ENCODE measurements at regions of chr16 and their contacts with region 1.

Region 1: DNA sequence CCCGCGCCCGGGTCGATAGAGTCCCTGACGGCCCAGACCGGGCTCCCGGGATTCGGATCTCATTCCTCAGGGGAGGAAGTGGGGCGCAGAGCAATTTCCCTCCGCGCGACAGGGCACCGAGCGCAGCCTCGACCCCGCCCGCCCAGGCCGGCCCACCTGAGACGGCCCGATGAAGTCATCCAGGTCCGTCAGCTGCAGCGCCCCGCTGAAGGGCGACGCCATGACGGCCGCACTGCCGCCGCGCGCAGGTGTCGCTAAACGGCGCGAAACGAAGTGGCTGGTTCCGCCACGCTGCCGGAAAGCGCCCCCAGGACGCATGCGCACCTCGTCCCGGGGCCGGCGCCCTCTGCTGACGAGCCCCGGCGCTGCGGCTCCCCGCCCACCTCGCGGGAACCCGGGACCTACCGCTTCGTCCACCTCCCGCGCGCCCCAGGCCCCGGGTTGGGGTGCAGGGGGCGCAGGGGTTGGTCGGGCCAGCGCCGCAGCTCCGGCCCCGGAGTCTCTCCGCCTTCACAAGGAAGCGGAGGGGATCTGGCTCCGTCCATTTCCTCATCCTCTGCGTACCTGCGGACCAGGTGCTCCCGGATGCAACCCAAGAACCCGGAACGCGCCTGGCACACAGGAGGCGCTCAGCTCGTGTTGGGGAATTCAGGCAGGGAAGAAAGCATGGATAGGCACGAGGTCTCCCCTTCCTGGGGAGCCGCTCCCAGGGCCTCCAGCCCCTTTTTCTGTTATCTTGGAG is at the start of gene CIAO3:
- DNase-seq: peak; percentile 95
- total RNA-seq, gene CIAO3: 21.7 TPM

Region 2: GRCh38 chr16:578870-579405 is 162.0 kb before region 1 on chr16:
- intact Hi-C with region 1: no loop called
- DNase-seq: peak; percentile 85

Region 3: GRCh38 chr16:720990-721764 is 19.8 kb before region 1 on chr16 and contains the start of gene ANTKMT:
- intact Hi-C with region 1: loop called (anchors 2 kb)
- DNase-seq: peak; percentile 85
- total RNA-seq, gene ANTKMT: 36.6 TPM

Region 4: DNA sequence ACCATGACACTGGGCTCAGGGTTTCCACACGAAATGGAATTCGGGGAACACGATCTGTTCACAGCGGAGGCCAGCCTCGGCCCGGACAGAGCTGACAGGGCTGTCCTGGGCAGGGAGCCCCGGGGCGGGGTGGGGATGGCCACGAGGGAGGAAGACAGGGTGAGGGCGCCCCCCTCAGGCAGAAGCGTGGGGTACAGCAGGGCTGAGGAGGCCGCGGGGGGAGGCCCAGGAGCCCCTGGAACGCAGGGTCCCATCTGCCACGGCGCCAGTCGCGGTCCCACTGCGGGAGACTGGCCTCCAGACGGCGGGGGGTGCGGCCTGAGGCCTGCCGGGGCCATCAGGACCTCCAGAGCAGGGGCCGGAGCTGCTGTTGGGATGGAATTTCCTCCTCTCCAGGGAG is 153.9 kb after region 1 on chr16:
- intact Hi-C with region 1: no loop called
- DNase-seq: no peak